Mammary epithelial cell (primary cell): ENCODE measurements at regions of chr3 and their contacts with region 1.

Region 1: DNA sequence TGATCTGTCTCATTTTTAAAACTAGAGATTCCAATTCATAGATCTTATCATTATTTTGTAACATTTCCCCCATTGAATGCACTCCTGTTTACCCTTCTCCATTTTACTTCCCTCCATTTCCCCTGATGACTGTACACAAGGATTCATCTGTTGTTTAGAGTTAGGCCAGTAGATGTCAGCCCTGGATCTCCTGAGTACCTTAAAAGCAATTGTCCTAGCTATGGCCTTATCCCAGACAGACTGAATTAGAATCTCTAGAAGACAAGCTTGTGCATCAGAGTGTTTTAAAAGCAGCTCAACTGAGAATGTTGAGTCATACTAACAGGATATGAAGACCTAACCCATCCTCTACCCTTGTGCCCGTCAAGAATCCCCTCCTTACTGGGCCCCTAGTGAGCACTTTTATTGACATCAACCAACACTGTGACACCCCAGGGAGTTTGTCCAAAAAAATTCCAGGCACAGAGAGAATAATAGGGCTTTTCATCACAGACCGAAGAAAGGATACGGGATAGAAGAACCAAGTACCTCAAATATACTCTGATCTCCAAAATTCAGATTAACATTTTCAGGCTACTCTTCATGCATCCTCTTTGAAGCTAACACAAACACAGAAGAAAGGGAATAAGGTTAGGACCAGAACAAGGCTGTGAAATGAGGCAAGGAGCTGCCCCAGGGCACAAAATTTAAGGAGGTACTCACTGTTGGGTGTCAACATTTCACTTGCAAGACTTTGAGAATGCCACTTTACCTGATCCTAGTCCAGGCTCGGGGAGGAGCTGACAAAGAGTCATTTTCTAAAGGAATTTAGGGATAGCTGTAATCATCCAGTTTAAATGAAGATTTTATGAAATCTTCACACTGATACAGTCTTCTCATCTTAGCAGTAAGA is 17.1 kb downstream of the ZBED2 start:
- DNase-seq: peak; percentile 80
- H3K4me3 ChIP-seq: no peak overlapping the region
- H3K27ac ChIP-seq: peak overlapping the region; percentile 40
- H3K4me1 ChIP-seq: peaks cover 30% of the 10 kb centered on the region
- H3K27me3 ChIP-seq: no peaks in the 10 kb centered on the region
- CTCF ChIP-seq: peak; percentile 72 to 85

Region 2: DNA sequence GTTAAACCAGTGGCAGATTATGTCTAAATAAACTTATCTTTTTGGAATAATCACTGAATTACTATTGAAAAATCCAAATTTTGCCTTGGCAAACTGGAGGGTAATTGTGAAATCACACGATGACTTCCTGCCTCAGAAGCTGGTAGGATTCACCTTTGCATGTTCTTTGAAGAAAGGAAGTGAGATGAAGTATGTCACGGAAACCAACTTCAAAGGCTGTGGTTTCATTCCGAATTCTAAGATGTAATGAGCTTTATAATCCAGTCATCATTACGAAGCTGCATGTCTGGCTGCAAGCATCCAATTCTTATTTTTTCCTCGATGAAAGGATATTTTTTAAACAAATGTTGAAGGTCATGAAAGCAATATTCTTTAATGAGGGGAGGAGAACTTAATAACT is 32.1 kb after region 1 on chr3:
- CTCF ChIA-PET with region 1: interaction called, 19 read pairs
- dilution Hi-C with region 1: loop called (anchors 5 kb)
- in situ Hi-C with region 1: no loop called
- intact Hi-C with region 1: no loop called
- DNase-seq: peak; percentile 81
- H3K4me3 ChIP-seq: peak overlapping the region; percentile 6 to 21 (median 10)
- H3K27ac ChIP-seq: peak overlapping the region; percentile 95
- H3K4me1 ChIP-seq: peaks cover 24% of the 10 kb centered on the region
- H3K27me3 ChIP-seq: no peaks in the 10 kb centered on the region
- CTCF ChIP-seq: no peak

Region 3: DNA sequence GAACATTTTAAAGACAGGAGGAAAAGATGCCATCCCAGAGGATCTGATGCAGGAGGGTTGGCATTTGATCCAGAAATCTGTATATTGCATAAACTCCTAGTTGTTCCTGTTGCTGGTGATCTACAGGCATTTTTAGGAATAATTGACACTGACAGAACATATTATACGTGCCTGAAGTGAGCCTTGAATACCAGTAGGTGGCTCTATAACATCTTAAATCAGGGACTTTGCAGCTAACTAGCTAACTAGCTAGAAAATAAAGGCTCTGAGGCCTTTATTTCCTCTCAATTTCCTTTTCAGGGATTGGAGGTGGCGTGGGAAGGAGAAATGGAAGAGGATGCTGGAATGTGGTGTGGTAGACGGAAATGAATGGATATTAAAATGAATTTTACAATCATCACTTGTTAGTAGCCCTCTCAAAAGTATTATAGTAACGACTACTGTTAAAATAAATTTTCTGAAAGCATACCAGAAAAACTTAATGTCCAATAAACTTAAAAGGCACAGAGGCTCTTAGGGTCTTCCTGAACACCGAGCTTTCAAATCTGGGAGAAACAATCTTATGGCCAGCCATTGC is 91.0 kb after region 1 on chr3:
- CTCF ChIA-PET with region 1: interaction called, 10 read pairs
- dilution Hi-C with region 1: loop called (anchors 5 kb)
- in situ Hi-C with region 1: loop called in 1 of 2 experiments (anchors 10 kb)
- intact Hi-C with region 1: loop called (anchors 1 kb)
- DNase-seq: peak; percentile 48
- H3K4me3 ChIP-seq: no peak overlapping the region
- H3K27ac ChIP-seq: no peak overlapping the region
- H3K4me1 ChIP-seq: peaks cover 49% of the 10 kb centered on the region
- H3K27me3 ChIP-seq: no peaks in the 10 kb centered on the region
- CTCF ChIP-seq: peak; percentile 76 to 85

Region 4: GRCh38 chr3:111691293-111691909 is 113.4 kb after region 1 on chr3:
- CTCF ChIA-PET with region 1: interaction called, 21 read pairs
- dilution Hi-C with region 1: loop called (anchors 10 kb)
- in situ Hi-C with region 1: loop called in 1 of 2 experiments (anchors 10 kb)
- intact Hi-C with region 1: loop called (anchors 1 kb)
- DNase-seq: peak; percentile 40
- H3K4me3 ChIP-seq: no peak overlapping the region
- H3K27ac ChIP-seq: no peak overlapping the region
- H3K4me1 ChIP-seq: peaks cover 37% of the 10 kb centered on the region
- H3K27me3 ChIP-seq: no peaks in the 10 kb centered on the region
- CTCF ChIP-seq: peak; percentile 54 to 61

Region 5: DNA sequence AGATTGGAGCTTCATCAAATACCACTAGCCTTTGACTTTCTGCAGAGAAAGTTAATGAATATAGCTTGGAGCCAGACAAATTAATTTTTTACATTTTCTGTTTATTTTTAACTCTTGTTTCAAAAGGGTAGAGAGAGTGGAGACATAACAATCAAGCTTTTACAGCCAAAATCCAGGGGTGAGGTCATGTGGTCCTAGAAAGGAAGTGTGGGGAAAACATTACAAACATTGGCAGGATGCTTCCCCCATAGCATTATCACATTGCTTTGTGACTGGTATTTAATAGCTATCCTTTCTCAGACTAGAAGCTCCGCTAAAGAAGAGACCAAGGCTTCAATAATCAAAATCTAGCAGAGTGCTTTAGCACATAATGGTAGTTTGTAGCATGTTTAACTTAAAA is 234.7 kb after region 1 on chr3:
- CTCF ChIA-PET with region 1: no interaction called
- dilution Hi-C with region 1: no loop called
- in situ Hi-C with region 1: no loop called
- intact Hi-C with region 1: no loop called
- DNase-seq: no peak
- H3K4me3 ChIP-seq: no peak overlapping the region
- H3K27ac ChIP-seq: no peak overlapping the region
- H3K4me1 ChIP-seq: peaks cover 40% of the 10 kb centered on the region
- H3K27me3 ChIP-seq: no peaks in the 10 kb centered on the region
- CTCF ChIP-seq: no peak

Region 6: DNA sequence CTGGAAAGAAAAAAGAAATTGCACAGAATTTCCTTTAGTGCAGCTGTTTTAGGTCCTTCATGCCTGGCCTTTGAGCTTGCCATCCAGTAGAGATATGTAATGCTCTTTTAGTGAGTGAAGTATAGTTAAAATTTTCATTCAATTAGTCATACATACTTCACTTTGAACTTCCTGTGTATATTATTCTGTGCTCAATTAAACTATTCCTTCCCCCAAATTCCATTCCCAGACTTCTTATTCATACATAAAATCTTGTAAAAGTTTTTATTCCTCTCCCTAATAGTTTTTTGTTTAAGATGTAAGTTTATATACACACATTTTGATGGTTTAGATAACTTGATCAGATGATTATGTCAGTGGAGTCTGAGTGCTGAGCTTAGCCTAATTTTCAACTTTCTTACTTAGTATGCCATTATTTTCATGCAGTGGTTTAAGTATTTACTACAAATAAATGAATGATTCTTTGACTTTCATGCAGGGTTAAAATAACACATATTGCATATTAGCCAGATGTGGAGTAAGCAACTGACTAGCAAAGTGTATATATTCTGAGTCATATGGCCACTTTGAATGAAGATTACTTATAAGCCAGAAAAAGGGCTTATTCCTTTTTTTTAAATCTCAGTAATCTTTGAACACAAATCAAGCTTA is 358.3 kb after region 1 on chr3:
- CTCF ChIA-PET with region 1: no interaction called
- dilution Hi-C with region 1: loop called (anchors 25 kb)
- in situ Hi-C with region 1: no loop called
- intact Hi-C with region 1: no loop called
- DNase-seq: peak; percentile 37
- H3K4me3 ChIP-seq: no peak overlapping the region
- H3K27ac ChIP-seq: peak overlapping the region; percentile 99
- H3K4me1 ChIP-seq: peaks cover 29% of the 10 kb centered on the region
- H3K27me3 ChIP-seq: no peaks in the 10 kb centered on the region
- CTCF ChIP-seq: no peak